Activated CD4-positive, alpha-beta memory T cell treated with anti-CD3 and anti-CD28 coated beads for 36 hours (primary cell): ENCODE measurements at regions of chr17 and their contacts with region 1.

Region 1: GRCh38 chr17:3738562-3739295 is 15.0 kb downstream of the HASPIN start:
- DNase-seq: peak; percentile 87
- H3K4me3 Mint-ChIP-seq: no peak overlapping the region
- H3K27ac Mint-ChIP-seq: peak overlapping the region; percentile 26
- H3K4me1 Mint-ChIP-seq: peaks cover 32% of the 10 kb centered on the region
- H3K27me3 Mint-ChIP-seq: no peaks in the 10 kb centered on the region

Region 2: DNA sequence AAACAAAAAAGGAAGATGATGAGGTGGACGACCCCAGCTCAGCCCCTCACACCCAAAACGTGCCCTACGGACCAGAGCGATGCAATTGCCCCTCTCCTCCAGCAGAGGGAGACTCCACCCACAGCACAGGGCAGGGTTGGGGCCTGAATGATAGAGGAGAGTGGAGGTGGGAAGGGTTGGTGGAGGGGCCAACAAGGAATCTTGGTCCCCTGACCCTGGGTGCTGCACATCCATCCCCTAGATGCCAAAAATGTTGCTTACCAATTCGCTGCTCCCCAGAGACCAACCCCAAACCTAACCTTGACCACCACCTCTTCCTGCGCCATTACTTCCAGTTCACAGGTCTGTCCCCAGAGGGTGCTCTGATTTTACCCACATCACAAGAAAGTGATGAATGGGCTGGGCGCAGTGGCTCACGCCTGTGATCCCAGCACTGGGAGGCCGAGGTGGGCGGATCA is 55.6 kb before region 1 on chr17:
- CTCF ChIA-PET with region 1: interaction called, 37 read pairs
- POLR2A ChIA-PET with region 1: no interaction called
- intact Hi-C with region 1: loop called (anchors 5 kb)
- DNase-seq: peak; percentile 73
- H3K4me3 Mint-ChIP-seq: no peak overlapping the region
- H3K27ac Mint-ChIP-seq: no peak overlapping the region
- H3K4me1 Mint-ChIP-seq: peaks cover 17% of the 10 kb centered on the region
- H3K27me3 Mint-ChIP-seq: no peaks in the 10 kb centered on the region

Region 3: DNA sequence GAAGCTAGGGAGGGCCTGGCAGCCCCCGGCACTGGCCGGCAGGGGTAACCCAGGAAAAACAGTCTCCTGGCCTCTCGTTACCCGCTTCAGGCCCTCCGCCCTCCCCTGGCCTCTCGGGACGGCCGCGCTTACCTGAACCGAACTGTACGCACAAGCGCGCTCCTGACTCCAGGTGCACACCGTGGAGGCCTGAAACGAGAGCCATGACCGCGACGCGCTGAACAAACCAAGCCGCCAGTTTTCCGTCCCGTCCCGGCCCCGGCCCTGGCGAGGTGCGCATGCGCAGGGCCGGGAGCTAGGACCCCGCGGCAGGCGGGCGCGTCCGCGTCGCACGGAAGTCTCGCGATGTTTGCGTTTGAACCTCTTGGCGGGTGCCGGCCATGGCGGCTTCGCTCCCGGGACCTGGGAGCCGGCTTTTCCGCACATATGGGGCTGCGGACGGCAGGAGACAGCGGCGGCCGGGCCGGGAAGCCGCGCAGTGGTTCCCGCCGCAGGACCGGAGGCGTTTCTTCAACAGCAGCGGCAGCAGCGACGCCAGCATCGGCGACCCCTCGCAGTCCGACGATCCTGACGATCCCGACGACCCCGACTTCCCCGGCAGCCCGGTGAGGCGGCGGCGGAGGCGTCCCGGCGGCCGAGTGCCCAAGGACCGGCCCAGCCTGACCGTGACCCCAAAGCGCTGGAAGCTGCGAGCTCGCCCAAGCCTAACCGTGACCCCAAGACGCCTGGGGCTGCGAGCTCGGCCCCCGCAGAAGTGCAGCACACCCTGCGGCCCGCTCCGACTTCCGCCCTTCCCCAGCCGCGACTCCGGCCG is 15.0 kb before region 1 on chr17 and contains the start of gene HASPIN:
- CTCF ChIA-PET with region 1: interaction called, 31 read pairs
- POLR2A ChIA-PET with region 1: interaction called, 4 read pairs
- intact Hi-C with region 1: loop called (anchors 2 kb)
- DNase-seq: peak; percentile 95
- H3K4me3 Mint-ChIP-seq: peak within 1 kb of the TSS; percentile 97
- H3K27ac Mint-ChIP-seq: peak within 1 kb of the TSS; percentile 90
- H3K4me1 Mint-ChIP-seq: peaks cover 54% of the 10 kb centered on the region
- H3K27me3 Mint-ChIP-seq: no peaks in the 10 kb centered on the region
- total RNA-seq, gene HASPIN: 22.0 to 22.7 TPM

Region 4: DNA sequence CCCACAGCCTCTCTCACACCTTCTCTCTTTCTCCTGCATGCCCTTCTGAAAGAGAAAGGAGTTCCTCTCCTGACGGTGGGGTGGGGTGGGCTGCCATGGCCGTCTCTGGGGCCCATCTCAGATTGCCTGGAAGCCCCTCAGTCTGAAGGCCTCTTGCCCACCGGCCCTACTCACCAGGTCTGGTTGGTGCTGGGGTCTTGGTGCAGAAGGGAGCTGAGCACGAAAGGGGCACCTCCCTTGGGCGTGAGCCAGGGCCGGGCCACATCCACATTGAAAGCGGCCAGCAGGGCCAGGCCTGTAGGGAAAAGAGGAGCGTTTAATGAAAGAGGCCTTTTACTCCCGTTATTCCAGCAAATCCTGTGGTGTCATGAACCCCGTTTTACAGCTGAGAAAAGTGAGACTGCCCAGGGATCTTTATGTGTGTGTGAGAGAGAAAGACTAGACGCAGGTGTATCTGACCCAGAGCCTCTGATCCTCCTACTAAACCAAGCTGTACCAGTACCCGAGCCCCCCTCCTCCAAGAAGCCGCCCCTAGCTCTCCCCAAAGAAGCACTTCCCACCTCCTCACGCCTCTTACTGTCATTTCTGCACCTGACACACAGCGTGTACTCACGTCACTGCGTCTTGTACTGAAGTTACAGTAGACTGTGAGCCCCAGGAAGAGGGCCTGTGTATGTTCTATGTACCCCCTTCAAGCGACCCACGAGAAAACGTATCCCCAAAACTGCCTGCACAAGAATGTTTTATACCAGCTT is 38.8 kb after region 1 on chr17:
- CTCF ChIA-PET with region 1: interaction called, 19 read pairs
- POLR2A ChIA-PET with region 1: no interaction called
- intact Hi-C with region 1: no loop called
- DNase-seq: no peak
- H3K4me3 Mint-ChIP-seq: no peak overlapping the region
- H3K27ac Mint-ChIP-seq: no peak overlapping the region
- H3K4me1 Mint-ChIP-seq: no peaks in the 10 kb centered on the region
- H3K27me3 Mint-ChIP-seq: no peaks in the 10 kb centered on the region

Region 5: GRCh38 chr17:3804503-3804931 is 65.8 kb after region 1 on chr17:
- CTCF ChIA-PET with region 1: interaction called, 109 read pairs
- POLR2A ChIA-PET with region 1: no interaction called
- intact Hi-C with region 1: no loop called
- DNase-seq: peak; percentile 65
- H3K4me3 Mint-ChIP-seq: no peak overlapping the region
- H3K27ac Mint-ChIP-seq: peak overlapping the region; percentile 42
- H3K4me1 Mint-ChIP-seq: peaks cover 19% of the 10 kb centered on the region
- H3K27me3 Mint-ChIP-seq: no peaks in the 10 kb centered on the region

Region 6: DNA sequence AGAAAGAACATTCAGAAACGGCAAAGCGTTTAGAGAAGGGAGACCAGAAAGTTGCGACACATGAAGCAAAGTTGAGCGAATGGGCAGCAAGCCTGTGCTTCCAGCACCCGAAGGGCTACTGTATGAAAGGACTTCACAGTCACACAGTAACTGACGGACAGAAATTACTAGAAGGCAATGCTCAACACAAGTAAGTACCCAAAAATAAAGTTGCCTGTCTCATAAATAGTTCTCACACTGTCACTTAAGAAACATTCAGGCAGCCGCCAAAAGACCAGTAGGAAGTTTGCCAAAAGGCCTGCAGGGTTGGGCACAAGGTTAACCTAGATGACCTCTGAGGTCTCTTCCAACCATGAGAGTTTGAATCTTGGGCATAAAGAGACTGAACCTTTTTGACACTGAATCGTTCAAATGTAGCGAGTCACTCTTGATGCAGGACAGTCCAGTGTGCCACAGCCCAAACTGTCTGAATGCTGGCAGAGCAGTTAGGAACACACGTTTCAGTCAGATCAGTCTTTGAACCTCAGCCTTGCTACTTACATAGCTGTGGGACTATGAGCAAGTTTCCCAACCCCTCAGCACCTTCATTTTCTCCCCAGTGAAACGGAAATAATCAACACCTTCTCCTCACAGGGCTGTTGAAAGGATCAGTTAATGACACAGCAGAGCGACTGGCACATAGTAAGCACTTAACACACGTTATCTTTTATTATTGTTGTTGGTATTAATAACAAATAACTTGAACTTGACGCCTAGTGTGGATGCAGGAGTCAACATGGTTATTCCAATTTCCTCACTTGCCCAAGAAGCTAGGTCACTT is 96.9 kb after region 1 on chr17:
- CTCF ChIA-PET with region 1: interaction called, 402 read pairs
- POLR2A ChIA-PET with region 1: no interaction called
- intact Hi-C with region 1: no loop called
- DNase-seq: no peak
- H3K4me3 Mint-ChIP-seq: no peak overlapping the region
- H3K27ac Mint-ChIP-seq: peak overlapping the region; percentile 36
- H3K4me1 Mint-ChIP-seq: peaks cover 6% of the 10 kb centered on the region
- H3K27me3 Mint-ChIP-seq: no peaks in the 10 kb centered on the region

Region 7: DNA sequence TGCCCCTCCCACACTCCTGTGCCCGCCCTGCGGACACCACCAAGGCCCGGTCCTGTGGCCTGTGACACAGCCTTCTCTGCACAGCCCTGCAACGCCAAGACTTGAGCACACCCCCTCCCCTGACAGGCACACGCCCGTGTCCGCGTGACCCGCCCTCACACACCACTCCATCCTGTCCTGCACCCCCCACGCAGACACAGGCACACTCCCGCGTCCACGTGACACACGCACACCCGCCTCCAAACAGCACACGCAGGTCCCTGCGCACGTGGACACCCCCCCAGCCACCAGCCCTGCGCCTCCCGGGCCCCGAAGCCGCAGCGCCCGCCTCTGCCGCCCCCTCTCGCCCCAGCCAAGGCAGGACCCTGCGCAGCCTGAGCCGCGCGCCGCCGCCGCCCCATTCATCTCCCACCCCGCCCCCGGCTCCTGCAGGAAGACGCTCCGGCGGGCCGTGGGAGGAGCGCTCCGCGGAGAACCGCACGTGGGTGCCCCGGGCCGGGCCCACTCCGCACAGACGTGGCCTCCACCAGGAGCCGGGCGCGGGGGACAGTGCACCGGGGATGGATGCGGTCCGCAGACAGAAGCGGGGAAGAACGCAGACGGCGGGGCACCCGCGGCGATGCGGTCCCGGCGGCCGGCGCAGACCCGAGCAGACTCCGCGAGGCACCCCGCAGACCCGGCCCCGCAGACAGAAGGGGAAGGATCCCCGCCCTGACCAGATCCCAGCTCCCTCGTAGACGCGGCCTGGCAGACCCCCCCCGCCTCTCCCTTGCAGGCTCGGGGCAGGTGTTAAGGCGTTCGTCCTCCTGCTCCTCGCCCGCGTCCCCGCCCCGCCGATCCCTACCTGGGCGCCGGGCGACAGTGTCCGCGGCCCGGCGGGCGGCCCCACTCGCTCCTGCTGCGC is 153.6 kb after region 1 on chr17:
- CTCF ChIA-PET with region 1: no interaction called
- POLR2A ChIA-PET with region 1: no interaction called
- intact Hi-C with region 1: no loop called
- DNase-seq: peak; percentile 77
- H3K4me3 Mint-ChIP-seq: peak overlapping the region; percentile 61
- H3K27ac Mint-ChIP-seq: no peak overlapping the region
- H3K4me1 Mint-ChIP-seq: peaks cover 32% of the 10 kb centered on the region
- H3K27me3 Mint-ChIP-seq: no peaks in the 10 kb centered on the region

Region 8: GRCh38 chr17:3992370-3992769 is 253.6 kb after region 1 on chr17:
- CTCF ChIA-PET with region 1: no interaction called
- POLR2A ChIA-PET with region 1: no interaction called
- intact Hi-C with region 1: no loop called
- DNase-seq: no peak
- H3K4me3 Mint-ChIP-seq: no peak overlapping the region
- H3K27ac Mint-ChIP-seq: no peak overlapping the region
- H3K4me1 Mint-ChIP-seq: no peaks in the 10 kb centered on the region
- H3K27me3 Mint-ChIP-seq: peaks cover 8% of the 10 kb centered on the region

Region 9: GRCh38 chr17:4004517-4005295 is 266.0 kb after region 1 on chr17:
- CTCF ChIA-PET with region 1: interaction called, 3 read pairs
- POLR2A ChIA-PET with region 1: no interaction called
- intact Hi-C with region 1: loop called (anchors 10 kb)
- DNase-seq: peak; percentile 65
- H3K4me3 Mint-ChIP-seq: no peak overlapping the region
- H3K27ac Mint-ChIP-seq: no peak overlapping the region
- H3K4me1 Mint-ChIP-seq: peaks cover 6% of the 10 kb centered on the region
- H3K27me3 Mint-ChIP-seq: no peaks in the 10 kb centered on the region